ENCODE measurements at regions of chr5 and their contacts with region 1.

Region 1: DNA sequence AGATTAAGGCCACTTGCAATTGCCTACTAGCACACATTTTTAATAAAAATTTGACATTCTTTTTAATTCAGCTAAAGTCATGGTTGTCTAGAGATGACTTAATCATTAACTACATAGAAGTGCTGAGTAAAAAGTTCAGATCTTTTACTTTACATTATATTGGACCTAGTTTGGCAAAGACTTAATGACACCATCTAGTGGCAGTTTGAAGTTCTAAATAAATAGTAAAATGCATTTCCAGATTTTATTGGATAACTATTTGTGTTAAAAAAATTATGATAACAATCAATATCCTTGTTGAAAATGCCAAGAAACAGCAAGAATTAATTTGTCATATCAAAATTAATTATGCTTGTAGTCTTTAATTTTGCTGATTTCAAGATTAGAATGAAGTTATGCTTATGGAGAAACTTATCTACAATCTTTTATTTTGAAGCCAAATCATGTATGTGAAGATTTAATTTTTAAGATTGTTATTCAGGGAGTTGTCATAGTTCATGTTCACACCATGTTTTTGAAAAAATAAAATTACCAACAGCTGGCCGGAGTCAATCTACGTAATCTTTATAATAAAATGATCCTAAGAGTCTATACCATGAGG is 69.6 kb upstream of the PJA2 start:
- DNase-seq: no peak
- H3K4me3 ChIP-seq: no peak overlapping the region
- H3K27ac ChIP-seq: no peak overlapping the region
- H3K4me1 ChIP-seq: peaks cover 7% of the 10 kb centered on the region
- H3K27me3 ChIP-seq: no peaks in the 10 kb centered on the region
- CTCF ChIP-seq: peak; percentile 40

Region 2: GRCh38 chr5:108670591-108671289 is 808.6 kb before region 1 on chr5:
- intact Hi-C with region 1: loop called (anchors 10 kb)
- DNase-seq: no peak
- H3K4me3 ChIP-seq: no peak overlapping the region
- H3K27ac ChIP-seq: no peak overlapping the region
- H3K4me1 ChIP-seq: no peaks in the 10 kb centered on the region
- H3K27me3 ChIP-seq: no peaks in the 10 kb centered on the region
- CTCF ChIP-seq: no peak

Region 3: GRCh38 chr5:108919591-108920326 is 559.6 kb before region 1 on chr5:
- intact Hi-C with region 1: loop called (anchors 5 kb)
- DNase-seq: no peak
- H3K4me3 ChIP-seq: no peak overlapping the region
- H3K27ac ChIP-seq: no peak overlapping the region
- H3K4me1 ChIP-seq: no peaks in the 10 kb centered on the region
- H3K27me3 ChIP-seq: no peaks in the 10 kb centered on the region
- CTCF ChIP-seq: peak; percentile 26